ENCODE measurements at regions of chr2 and their contacts with region 1.

Region 1: DNA sequence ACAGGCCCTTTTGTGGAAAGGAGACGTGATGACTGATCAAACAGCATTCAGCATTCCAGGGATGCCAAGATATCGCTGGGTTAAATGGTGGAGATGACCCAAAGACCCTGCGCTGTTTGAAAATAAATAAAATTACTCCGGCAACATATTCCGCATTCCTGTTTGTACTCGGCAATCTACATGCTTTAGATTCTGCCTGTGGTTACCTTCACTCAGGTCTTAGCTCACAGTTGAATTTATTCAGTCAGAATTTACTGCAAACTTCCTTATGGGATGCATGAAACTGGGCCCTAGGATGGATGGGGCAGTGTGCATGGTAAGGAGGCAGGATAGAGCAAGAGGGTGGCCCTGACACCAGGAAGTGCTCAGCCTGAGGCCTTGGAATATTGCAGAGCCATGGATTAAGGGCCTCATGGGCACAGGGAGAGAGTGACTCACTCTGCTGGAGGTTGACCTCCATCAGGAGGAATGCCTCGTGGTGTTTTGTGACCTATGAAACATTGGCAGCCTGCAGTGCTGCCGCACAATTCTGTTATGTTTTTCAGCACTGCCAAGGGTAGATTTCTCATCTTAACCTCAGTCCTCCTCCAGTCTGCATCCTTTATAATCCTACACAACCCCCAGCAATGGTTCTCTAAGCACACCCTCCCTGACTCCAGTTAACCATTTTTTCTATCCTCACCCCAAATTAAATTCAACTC is 321.4 kb downstream of the IRS1 start:
- DNase-seq: peak; percentile 79 to 90
- H3K4me3 ChIP-seq: no peak overlapping the region
- H3K4me3 Mint-ChIP-seq: peak overlapping the region; percentile 49
- H3K27ac Mint-ChIP-seq: peak overlapping the region; percentile 96
- H3K4me1 ChIP-seq: peaks cover 91% of the 10 kb centered on the region
- H3K4me1 Mint-ChIP-seq: peaks cover 32% of the 10 kb centered on the region
- H3K27me3 ChIP-seq: no peaks in the 10 kb centered on the region
- H3K27me3 Mint-ChIP-seq: no peaks in the 10 kb centered on the region
- CTCF ChIP-seq: no peak

Region 2: DNA sequence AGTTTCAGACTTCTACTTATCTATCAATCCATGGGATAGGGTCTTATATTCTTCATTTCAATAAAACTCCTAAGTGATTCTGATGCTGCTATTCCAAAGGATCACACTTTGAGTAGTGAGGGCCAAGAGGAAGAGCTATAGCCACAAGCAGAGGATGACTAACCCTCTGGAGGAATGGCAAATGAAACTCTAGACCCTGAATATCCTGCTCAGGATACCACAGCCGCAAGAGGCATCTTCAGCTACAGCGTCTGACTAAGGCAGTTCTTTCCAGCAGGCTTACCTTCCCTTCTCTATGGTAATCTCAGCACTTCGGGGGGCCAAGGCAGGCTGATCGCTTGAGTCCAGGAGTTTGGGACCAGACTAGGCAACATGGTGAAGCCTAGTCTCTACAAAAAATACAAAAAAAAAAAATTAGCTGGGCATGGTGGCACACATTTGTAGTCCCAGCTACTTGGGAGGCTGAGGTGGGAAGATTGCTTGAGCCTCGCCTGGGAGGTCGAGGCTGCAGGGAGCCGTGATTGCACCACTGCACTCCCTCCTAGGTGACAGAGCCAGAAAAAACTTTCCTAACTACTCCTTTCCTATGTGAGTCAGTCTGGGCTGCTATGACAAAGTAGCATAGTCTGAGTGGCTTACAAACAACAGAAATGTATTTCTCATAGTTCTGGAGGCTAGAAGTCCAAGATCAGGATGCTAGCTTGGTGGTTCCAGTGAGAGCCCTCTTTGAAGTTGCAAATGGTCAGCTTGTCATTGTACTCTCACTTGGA is 50.5 kb before region 1 on chr2:
- CTCF ChIA-PET with region 1: no interaction called
- POLR2A ChIA-PET with region 1: no interaction called
- intact Hi-C with region 1: loop called (anchors 5 kb)
- DNase-seq: no peak
- H3K4me3 ChIP-seq: no peak overlapping the region
- H3K4me3 Mint-ChIP-seq: no peak overlapping the region
- H3K27ac Mint-ChIP-seq: no peak overlapping the region
- H3K4me1 ChIP-seq: peaks cover 13% of the 10 kb centered on the region
- H3K4me1 Mint-ChIP-seq: peaks cover 20% of the 10 kb centered on the region
- H3K27me3 ChIP-seq: no peaks in the 10 kb centered on the region
- H3K27me3 Mint-ChIP-seq: no peaks in the 10 kb centered on the region
- CTCF ChIP-seq: no peak

Region 3: DNA sequence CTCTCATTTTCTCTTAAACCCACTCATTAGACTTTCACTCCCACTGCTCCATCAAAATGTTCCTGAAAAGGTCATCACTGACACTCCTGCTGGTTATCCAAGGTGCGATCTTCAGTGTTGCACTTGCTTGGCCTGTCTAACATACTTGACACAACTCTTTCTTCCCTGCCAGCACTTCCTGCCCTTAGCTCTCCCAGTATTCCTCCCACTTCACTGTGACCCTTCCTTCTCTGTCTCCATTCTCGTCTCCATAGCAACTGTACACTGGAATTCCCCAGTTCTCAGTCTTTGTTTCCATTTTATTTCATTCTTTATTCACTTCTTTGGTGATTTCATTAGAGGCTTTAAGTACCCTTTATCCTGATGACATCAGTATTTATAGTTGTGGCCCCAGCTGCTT is 11.7 kb before region 1 on chr2:
- CTCF ChIA-PET with region 1: interaction called, 3 read pairs
- POLR2A ChIA-PET with region 1: interaction called, 4 read pairs
- intact Hi-C with region 1: loop called (anchors 1 kb)
- DNase-seq: peak in 1 of 2 experiments; percentile 20
- H3K4me3 ChIP-seq: no peak overlapping the region
- H3K4me3 Mint-ChIP-seq: no peak overlapping the region
- H3K27ac Mint-ChIP-seq: no peak overlapping the region
- H3K4me1 ChIP-seq: peaks cover 25% of the 10 kb centered on the region
- H3K4me1 Mint-ChIP-seq: no peaks in the 10 kb centered on the region
- H3K27me3 ChIP-seq: no peaks in the 10 kb centered on the region
- H3K27me3 Mint-ChIP-seq: no peaks in the 10 kb centered on the region
- CTCF ChIP-seq: no peak

Region 4: DNA sequence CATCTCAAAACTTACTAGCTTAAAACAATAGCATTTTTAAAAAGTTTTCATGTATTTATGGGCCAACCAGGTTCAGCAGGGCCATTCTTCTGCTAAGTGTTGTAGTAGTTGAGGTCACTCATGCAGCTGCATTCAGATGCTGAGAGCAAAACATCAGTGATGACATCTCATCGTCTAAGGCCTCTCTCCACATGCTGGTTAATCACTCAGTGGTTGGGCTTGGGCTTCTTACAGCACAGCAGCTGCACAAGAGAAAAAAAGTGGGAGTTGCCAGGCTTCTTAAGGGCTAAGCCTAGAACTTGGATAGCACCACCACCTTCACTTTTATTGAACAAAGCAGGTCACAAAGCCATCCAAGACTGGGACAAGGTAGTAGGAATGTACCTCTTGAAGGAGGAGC is 131.1 kb after region 1 on chr2:
- CTCF ChIA-PET with region 1: no interaction called
- POLR2A ChIA-PET with region 1: no interaction called
- intact Hi-C with region 1: loop called (anchors 10 kb)
- DNase-seq: no peak
- H3K4me3 ChIP-seq: no peak overlapping the region
- H3K4me3 Mint-ChIP-seq: no peak overlapping the region
- H3K27ac Mint-ChIP-seq: no peak overlapping the region
- H3K4me1 ChIP-seq: no peaks in the 10 kb centered on the region
- H3K4me1 Mint-ChIP-seq: no peaks in the 10 kb centered on the region
- H3K27me3 ChIP-seq: no peaks in the 10 kb centered on the region
- H3K27me3 Mint-ChIP-seq: no peaks in the 10 kb centered on the region
- CTCF ChIP-seq: no peak

Measured in Caco-2 (cell line).